ENCODE measurements at regions of chr15 and their contacts with region 1.

Region 1: DNA sequence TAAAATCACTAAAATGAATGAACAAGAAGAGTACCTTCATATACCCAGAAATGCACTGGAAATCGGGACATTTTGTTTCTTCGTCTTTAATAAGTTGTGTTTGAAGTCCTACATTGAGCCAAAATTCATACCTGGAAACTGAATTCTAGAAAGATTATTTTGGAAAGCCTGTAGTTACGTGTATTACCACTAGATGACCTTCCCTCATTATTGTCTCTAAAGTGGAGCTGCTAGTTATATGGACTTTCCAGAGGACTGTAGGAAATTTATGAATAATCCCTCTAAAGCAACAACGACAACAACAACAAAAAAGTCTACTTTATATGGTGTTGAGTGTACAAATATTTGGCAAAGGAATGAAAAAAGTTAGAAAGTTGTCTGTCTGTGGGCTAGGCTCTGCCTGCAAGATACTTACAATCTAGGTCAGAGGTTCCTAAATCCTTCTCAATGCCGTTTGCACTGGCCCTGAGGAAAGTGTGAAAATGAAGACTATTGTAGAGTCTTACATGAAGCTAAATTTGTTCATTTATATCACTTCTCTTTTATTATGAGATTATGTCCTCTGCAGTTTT is 234.8 kb upstream of the NR2E3 start:
- DNase-seq: peak; percentile 23
- H3K4me3 Mint-ChIP-seq: no peak overlapping the region
- H3K27ac Mint-ChIP-seq: no peak overlapping the region
- H3K4me1 Mint-ChIP-seq: peaks cover 19% of the 10 kb centered on the region
- H3K27me3 Mint-ChIP-seq: no peaks in the 10 kb centered on the region
- CTCF ChIP-seq: peak; percentile 44

Region 2: DNA sequence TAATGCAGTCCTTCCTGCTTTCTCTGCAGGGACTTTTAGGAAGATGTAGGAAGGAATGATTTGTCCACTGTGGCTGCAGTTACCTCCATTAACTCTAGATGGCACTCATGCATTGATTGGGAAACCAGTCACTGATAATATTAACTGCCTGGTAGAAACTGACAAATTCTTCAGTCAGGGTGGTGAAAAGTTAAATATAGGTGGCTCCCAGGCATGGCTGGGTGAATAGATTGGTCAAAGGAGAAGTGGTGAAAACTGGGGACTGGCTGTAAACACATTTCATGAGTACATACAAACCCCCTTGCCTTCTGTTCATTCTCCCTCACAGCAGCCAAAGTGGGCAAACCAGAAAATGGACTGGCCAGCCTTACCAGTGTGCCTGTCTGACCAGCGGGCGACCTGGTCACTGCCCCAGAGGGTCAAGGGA is 126.9 kb before region 1 on chr15:
- CTCF ChIA-PET with region 1: interaction called, 26 read pairs
- POLR2A ChIA-PET with region 1: interaction called, 5 read pairs
- intact Hi-C with region 1: loop called (anchors 2 kb)
- DNase-seq: peak; percentile 79
- H3K4me3 Mint-ChIP-seq: no peak overlapping the region
- H3K27ac Mint-ChIP-seq: peak overlapping the region; percentile 39
- H3K4me1 Mint-ChIP-seq: no peaks in the 10 kb centered on the region
- H3K27me3 Mint-ChIP-seq: no peaks in the 10 kb centered on the region
- CTCF ChIP-seq: peak; percentile 86

Region 3: GRCh38 chr15:71532994-71533393 is 42.6 kb before region 1 on chr15:
- CTCF ChIA-PET with region 1: interaction called, 23 read pairs
- POLR2A ChIA-PET with region 1: interaction called, 4 read pairs
- intact Hi-C with region 1: no loop called
- DNase-seq: peak; percentile 74
- H3K4me3 Mint-ChIP-seq: peak overlapping the region; percentile 24
- H3K27ac Mint-ChIP-seq: no peak overlapping the region
- H3K4me1 Mint-ChIP-seq: peaks cover 2% of the 10 kb centered on the region
- H3K27me3 Mint-ChIP-seq: no peaks in the 10 kb centered on the region
- CTCF ChIP-seq: peak; percentile 80

Region 4: GRCh38 chr15:71562251-71562650 is 13.3 kb before region 1 on chr15:
- CTCF ChIA-PET with region 1: interaction called, 9 read pairs
- POLR2A ChIA-PET with region 1: interaction called, 19 read pairs
- intact Hi-C with region 1: no loop called
- DNase-seq: peak; percentile 14
- H3K4me3 Mint-ChIP-seq: no peak overlapping the region
- H3K27ac Mint-ChIP-seq: no peak overlapping the region
- H3K4me1 Mint-ChIP-seq: peaks cover 26% of the 10 kb centered on the region
- H3K27me3 Mint-ChIP-seq: no peaks in the 10 kb centered on the region
- CTCF ChIP-seq: no peak

Region 5: GRCh38 chr15:71611551-71612396 is 36.2 kb after region 1 on chr15:
- CTCF ChIA-PET with region 1: no interaction called
- POLR2A ChIA-PET with region 1: no interaction called
- intact Hi-C with region 1: no loop called
- DNase-seq: no peak
- H3K4me3 Mint-ChIP-seq: no peak overlapping the region
- H3K27ac Mint-ChIP-seq: no peak overlapping the region
- H3K4me1 Mint-ChIP-seq: peaks cover 25% of the 10 kb centered on the region
- H3K27me3 Mint-ChIP-seq: no peaks in the 10 kb centered on the region
- CTCF ChIP-seq: no peak

Region 6: DNA sequence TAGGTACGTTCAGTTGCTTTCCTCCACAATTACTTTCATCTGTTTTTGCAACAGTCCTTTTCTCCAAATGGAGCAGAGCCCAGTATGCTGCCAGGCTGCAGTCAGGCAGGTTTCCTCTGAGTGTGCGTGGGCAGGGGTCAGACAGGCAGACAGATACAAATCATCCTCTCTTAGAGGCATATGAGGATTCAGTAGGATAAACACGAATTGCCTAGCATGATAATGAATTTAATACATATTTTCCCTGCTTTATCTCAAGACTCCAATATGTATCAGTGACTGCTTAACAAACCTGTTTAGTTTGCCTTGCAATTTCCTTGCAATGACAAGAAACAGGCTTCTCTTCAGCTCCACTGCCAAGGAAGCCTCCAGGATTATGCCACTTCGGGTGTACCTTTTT is 94.1 kb after region 1 on chr15:
- CTCF ChIA-PET with region 1: no interaction called
- POLR2A ChIA-PET with region 1: no interaction called
- intact Hi-C with region 1: no loop called
- DNase-seq: no peak
- H3K4me3 Mint-ChIP-seq: no peak overlapping the region
- H3K27ac Mint-ChIP-seq: no peak overlapping the region
- H3K4me1 Mint-ChIP-seq: no peaks in the 10 kb centered on the region
- H3K27me3 Mint-ChIP-seq: no peaks in the 10 kb centered on the region
- CTCF ChIP-seq: no peak

Region 7: GRCh38 chr15:71899674-71900073 is 324.1 kb after region 1 on chr15:
- CTCF ChIA-PET with region 1: no interaction called
- POLR2A ChIA-PET with region 1: no interaction called
- intact Hi-C with region 1: no loop called
- DNase-seq: no peak
- H3K4me3 Mint-ChIP-seq: no peak overlapping the region
- H3K27ac Mint-ChIP-seq: no peak overlapping the region
- H3K4me1 Mint-ChIP-seq: no peaks in the 10 kb centered on the region
- H3K27me3 Mint-ChIP-seq: no peaks in the 10 kb centered on the region
- CTCF ChIP-seq: no peak